ENCODE measurements at regions of chr16 and their contacts with region 1.

Region 1: DNA sequence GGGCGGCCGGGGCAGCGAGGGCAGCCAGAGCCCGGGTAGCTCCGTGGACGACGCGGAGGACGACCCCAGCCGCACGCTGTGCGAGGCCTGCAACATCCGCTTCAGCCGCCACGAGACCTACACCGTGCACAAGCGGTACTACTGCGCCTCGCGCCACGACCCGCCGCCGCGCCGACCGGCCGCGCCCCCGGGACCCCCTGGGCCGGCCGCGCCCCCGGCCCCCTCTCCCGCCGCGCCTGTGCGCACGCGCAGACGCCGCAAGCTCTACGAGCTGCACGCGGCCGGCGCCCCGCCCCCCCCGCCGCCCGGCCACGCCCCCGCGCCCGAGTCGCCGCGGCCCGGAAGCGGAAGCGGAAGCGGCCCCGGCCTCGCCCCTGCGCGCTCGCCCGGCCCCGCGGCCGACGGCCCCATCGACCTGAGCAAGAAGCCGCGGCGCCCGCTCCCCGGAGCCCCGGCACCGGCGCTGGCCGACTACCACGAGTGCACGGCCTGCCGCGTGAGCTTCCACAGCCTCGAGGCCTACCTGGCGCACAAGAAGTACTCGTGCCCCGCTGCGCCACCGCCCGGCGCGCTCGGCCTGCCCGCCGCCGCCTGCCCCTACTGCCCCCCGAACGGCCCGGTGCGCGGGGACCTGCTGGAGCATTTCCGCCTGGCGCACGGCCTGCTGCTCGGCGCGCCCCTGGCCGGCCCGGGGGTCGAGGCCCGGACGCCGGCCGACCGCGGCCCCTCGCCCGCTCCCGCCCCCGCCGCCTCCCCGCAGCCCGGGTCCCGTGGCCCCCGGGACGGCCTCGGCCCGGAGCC is 36.1 kb upstream of the ZC3H18 start:
- DNase-seq: peak; percentile 59 to 92 (median 76)
- ATAC-seq: peak; percentile 70
- H3K4me3 ChIP-seq: peak overlapping the region; percentile 15 to 57
- H3K4me3 Mint-ChIP-seq: peak overlapping the region; percentile 64
- H3K27ac ChIP-seq: peak overlapping the region in 1 of 2 experiments; percentile 58
- H3K27ac Mint-ChIP-seq: no peak overlapping the region
- H3K4me1 ChIP-seq: peaks cover 8% of the 10 kb centered on the region
- H3K4me1 Mint-ChIP-seq: peaks cover 15% of the 10 kb centered on the region
- H3K27me3 ChIP-seq: no peaks in the 10 kb centered on the region
- H3K27me3 Mint-ChIP-seq: no peaks in the 10 kb centered on the region
- CTCF ChIP-seq: no peak

Region 2: DNA sequence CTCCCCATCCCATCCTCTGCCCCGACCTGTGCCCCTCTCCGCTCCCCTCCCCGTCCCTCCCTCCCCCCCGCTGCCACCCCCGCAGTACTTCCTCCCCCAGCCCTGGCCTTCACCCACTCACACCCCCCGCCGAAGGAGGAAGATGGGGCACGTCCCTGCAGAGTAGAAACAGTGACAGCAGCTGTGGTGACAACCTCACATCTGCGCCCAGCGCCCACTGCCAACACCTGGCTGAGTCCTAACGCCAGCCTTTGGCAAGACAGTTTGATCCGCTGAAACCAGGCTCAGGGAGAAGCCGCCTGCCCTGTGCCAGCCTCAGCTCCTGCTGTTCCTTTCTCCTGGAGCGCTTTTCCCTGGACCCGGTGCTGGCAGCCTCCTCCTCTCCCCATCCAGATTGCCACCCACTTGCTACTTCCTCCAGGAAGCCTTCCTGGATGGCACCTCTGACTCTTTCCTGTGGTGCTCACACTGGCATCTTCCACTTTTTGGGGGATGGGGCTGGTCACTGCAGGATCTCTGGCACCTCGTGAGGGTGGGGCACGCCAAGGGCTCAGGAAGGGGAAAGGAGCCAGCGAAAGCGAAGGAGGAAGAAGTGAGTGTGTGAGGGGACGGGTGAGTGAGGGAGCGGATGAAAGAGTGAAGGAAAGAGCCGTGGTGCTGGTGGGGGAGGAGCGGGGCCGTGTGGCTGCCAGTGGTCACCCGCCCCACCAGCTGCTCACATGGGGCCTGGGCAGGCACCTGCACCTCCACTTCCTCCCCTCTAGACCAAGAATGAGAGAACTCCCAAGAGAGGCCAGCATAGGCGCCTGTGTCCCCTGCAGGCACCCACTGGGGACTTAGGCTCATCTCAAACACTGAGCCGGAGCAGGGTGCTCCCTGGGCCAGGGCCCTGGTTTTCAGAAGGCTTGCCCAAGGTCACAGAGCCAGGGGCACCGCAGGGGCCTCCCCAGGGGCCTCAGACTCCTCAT is 54.1 kb before region 1 on chr16:
- CTCF ChIA-PET with region 1: no interaction called
- POLR2A ChIA-PET with region 1: no interaction called
- intact Hi-C with region 1: no loop called
- DNase-seq: peak in 6 of 9 experiments; percentile 40 to 76 (median 62)
- ATAC-seq: peak; percentile 40
- H3K4me3 ChIP-seq: no peak overlapping the region
- H3K4me3 Mint-ChIP-seq: peak overlapping the region; percentile 58
- H3K27ac ChIP-seq: peak overlapping the region in 1 of 2 experiments; percentile 53
- H3K27ac Mint-ChIP-seq: peak overlapping the region; percentile 57
- H3K4me1 ChIP-seq: peaks cover 42% of the 10 kb centered on the region
- H3K4me1 Mint-ChIP-seq: peaks cover 46% of the 10 kb centered on the region
- H3K27me3 ChIP-seq: no peaks in the 10 kb centered on the region
- H3K27me3 Mint-ChIP-seq: no peaks in the 10 kb centered on the region
- CTCF ChIP-seq: no peak

Region 3: GRCh38 chr16:88550246-88550661 is 16.1 kb after region 1 on chr16:
- CTCF ChIA-PET with region 1: interaction called, 5 read pairs
- POLR2A ChIA-PET with region 1: interaction called, 21 read pairs
- intact Hi-C with region 1: loop called in 1 of 2 experiments (anchors 2 kb)
- DNase-seq: peak in 2 of 9 experiments; percentile 67 to 71
- ATAC-seq: peak; percentile 85
- H3K4me3 ChIP-seq: peak overlapping the region; percentile 26 to 30
- H3K4me3 Mint-ChIP-seq: peak overlapping the region; percentile 82
- H3K27ac ChIP-seq: peak overlapping the region; percentile 33 to 63
- H3K27ac Mint-ChIP-seq: peak overlapping the region; percentile 93
- H3K4me1 ChIP-seq: peaks cover 29% of the 10 kb centered on the region
- H3K4me1 Mint-ChIP-seq: peaks cover 34% of the 10 kb centered on the region
- H3K27me3 ChIP-seq: no peaks in the 10 kb centered on the region
- H3K27me3 Mint-ChIP-seq: no peaks in the 10 kb centered on the region
- CTCF ChIP-seq: no peak

Measured in CD8-positive, alpha-beta T cell (primary cell).